Activated B cell treated with CpG ODN at 0.5 μM for 24 hours (primary cell): ENCODE measurements at regions of chr1 and their contacts with region 1.

Region 1: DNA sequence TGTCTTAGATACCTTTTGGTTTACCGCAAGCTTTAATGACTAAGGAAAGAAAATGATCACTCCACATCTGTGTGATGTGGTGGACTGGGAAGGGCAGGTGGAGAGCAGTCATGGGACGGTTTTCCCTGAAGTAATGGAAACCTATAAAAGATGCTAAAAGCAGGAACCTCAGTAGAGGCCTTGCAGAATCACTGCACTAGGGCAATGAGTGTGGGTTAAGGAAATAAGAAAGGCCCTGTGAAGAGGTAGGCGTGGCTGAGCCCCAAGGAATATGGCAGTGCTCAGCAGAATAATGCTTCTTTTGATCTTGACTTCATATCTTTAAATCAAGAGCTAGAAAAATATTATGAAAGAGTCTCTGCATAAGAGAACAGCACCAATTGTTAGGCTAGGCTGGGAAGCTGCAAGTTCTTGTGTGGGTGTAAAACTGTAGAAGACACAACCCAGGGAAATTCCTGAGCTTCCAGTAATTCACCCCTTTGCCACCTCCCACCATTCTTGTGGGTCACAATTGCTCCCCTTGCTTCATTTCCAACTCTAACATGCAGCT is 49.9 kb downstream of the CLCA4 start:
- DNase-seq: no peak
- ATAC-seq: no peak
- H3K4me3 Mint-ChIP-seq: no peak overlapping the region
- H3K27ac Mint-ChIP-seq: no peak overlapping the region
- H3K4me1 Mint-ChIP-seq: no peaks in the 10 kb centered on the region
- H3K27me3 Mint-ChIP-seq: peaks cover 7% of the 10 kb centered on the region
- CTCF ChIP-seq: no peak

Region 2: GRCh38 chr1:86567878-86568277 is 28.9 kb before region 1 on chr1:
- CTCF ChIA-PET with region 1: no interaction called
- POLR2A ChIA-PET with region 1: no interaction called
- intact Hi-C with region 1: loop called (anchors 5 kb)
- DNase-seq: no peak
- ATAC-seq: no peak
- H3K4me3 Mint-ChIP-seq: no peak overlapping the region
- H3K27ac Mint-ChIP-seq: no peak overlapping the region
- H3K4me1 Mint-ChIP-seq: no peaks in the 10 kb centered on the region
- H3K27me3 Mint-ChIP-seq: peaks cover 8% of the 10 kb centered on the region
- CTCF ChIP-seq: no peak

Region 3: GRCh38 chr1:86636898-86637297 is 40.1 kb after region 1 on chr1:
- CTCF ChIA-PET with region 1: no interaction called
- POLR2A ChIA-PET with region 1: no interaction called
- intact Hi-C with region 1: loop called (anchors 5 kb)
- DNase-seq: no peak
- ATAC-seq: no peak
- H3K4me3 Mint-ChIP-seq: no peak overlapping the region
- H3K27ac Mint-ChIP-seq: no peak overlapping the region
- H3K4me1 Mint-ChIP-seq: peaks cover 7% of the 10 kb centered on the region
- H3K27me3 Mint-ChIP-seq: no peaks in the 10 kb centered on the region
- CTCF ChIP-seq: no peak